GM23248 (cell line): ENCODE measurements at regions of chr12 and their contacts with region 1.

Region 1: DNA sequence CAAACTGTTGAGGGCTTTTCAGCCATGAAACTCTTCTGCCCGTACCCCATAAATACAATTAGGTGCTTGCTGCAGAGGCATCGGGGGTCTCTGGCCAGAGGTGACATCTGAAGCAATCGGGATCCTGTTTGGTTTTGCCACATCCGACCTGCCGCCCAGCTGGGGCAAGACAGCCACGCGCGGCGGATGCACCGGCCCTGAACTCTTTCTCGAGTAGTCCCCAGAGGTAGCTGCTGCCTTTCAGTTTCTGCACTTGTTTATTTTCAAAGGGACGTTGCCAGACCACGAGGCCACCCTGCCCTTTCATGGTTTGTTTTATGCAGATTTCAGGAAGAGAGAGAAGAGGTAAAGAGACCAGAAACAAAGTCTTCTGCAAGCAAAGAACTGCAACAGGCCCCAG is 10.6 kb upstream of the MLXIP start:
- DNase-seq: no peak
- H3K4me3 ChIP-seq: no peak overlapping the region
- H3K27ac ChIP-seq: no peak overlapping the region
- H3K4me1 ChIP-seq: peaks cover 28% of the 10 kb centered on the region
- H3K27me3 ChIP-seq: no peaks in the 10 kb centered on the region

Region 2: GRCh38 chr12:122116707-122117535 is 49.0 kb after region 1 on chr12:
- in situ Hi-C with region 1: loop called (anchors 5 kb)
- DNase-seq: no peak
- H3K4me3 ChIP-seq: no peak overlapping the region
- H3K27ac ChIP-seq: no peak overlapping the region
- H3K4me1 ChIP-seq: peaks cover 1% of the 10 kb centered on the region; the same call in 1 of the 2 replicates
- H3K27me3 ChIP-seq: no peaks in the 10 kb centered on the region